GM12878 (cell line): ENCODE measurements at regions of chr15 and their contacts with region 1.

Region 1: GRCh38 chr15:93173369-93173768 is 84.4 kb upstream of the RGMA start:
- DNase-seq: no peak
- ATAC-seq: no peak
- H3K4me3 ChIP-seq: no peak overlapping the region
- H3K27ac ChIP-seq: no peak overlapping the region
- H3K4me1 ChIP-seq: no peaks in the 10 kb centered on the region; the same call in 1 of the 2 replicates
- H3K27me3 ChIP-seq: peaks cover 2 to 4% of the 10 kb centered on the region in 2 experiments; a peak in 2 of 4 replicates
- CTCF ChIP-seq: no peak
- EP300 ChIP-seq: no peak
- POLR2A ChIP-seq: no peak
- RAD21 ChIP-seq: no peak

Region 2: DNA sequence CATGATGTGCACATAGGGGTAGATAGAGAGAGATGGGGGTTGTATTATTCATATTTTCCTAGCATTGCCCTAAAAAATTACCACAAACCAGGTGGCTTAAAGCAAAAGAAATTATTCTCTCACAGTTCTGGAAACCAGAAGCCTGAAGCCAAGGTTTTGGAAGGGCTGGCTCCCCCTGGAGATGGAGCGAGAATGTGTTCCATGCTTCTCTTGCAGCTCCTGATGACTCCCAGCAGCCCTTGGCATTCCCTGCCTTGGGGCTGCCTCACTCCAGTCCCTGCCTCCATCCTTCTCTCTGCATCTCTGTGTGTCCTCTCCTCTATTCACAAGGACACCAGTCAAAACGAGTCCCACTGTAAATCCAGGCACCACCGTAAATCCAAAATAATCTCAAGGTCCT is 426.3 kb before region 1 on chr15:
- CTCF ChIA-PET with region 1: no interaction called
- POLR2A ChIA-PET with region 1: no interaction called
- RAD21 ChIA-PET with region 1: no interaction called
- SMC1A ChIA-PET with region 1: no interaction called
- in situ Hi-C with region 1: no loop called
- intact Hi-C with region 1: no loop called
- DNase-seq: no peak
- ATAC-seq: no peak
- H3K4me3 ChIP-seq: no peak overlapping the region
- H3K27ac ChIP-seq: no peak overlapping the region
- H3K4me1 ChIP-seq: no peaks in the 10 kb centered on the region
- H3K27me3 ChIP-seq: no peaks in the 10 kb centered on the region
- CTCF ChIP-seq: no peak
- EP300 ChIP-seq: no peak
- POLR2A ChIP-seq: no peak
- RAD21 ChIP-seq: no peak

Region 3: GRCh38 chr15:93158104-93158900 is 15.1 kb before region 1 on chr15:
- CTCF ChIA-PET with region 1: no interaction called
- POLR2A ChIA-PET with region 1: no interaction called
- RAD21 ChIA-PET with region 1: no interaction called
- SMC1A ChIA-PET with region 1: no interaction called
- in situ Hi-C with region 1: no loop called
- intact Hi-C with region 1: no loop called
- DNase-seq: no peak
- ATAC-seq: no peak
- H3K4me3 ChIP-seq: no peak overlapping the region
- H3K27ac ChIP-seq: no peak overlapping the region
- H3K4me1 ChIP-seq: no peaks in the 10 kb centered on the region
- H3K27me3 ChIP-seq: no peaks in the 10 kb centered on the region
- CTCF ChIP-seq: no peak
- EP300 ChIP-seq: no peak
- POLR2A ChIP-seq: no peak
- RAD21 ChIP-seq: no peak

Region 4: DNA sequence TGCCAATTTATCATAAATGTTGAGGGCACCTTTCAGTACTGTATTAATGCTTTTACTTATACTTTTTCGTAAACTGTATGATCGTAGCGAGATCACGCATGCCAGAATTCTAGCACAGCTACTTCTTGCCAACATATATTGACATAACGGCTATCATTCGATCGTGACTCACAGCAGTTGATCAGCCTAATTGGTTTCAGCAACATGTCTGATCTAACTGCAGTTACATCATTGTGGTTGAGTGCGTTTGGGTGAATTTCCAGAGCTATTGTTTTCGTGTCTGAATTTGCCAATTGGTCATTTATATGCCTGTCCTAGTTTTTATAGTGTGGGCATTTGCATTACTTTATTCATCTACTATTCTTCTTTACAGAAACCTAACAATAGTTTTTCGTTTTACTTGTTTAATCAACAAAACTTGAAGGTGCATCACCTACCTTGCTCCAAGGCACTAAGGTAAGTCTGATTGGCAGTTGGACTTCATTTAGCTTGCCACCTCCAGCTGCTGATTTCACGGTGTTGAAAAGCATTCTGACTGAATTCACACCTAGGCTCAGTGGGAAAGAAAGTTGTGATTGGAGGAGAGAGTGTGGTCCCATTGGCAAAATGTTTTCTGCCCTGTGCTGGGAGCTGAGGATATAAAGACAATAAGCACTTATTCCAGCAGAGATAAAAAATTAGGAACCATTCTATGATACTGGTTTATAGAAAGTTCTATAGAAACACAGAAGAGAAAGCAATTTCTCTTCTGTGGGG is 36.5 kb after region 1 on chr15:
- CTCF ChIA-PET with region 1: no interaction called
- POLR2A ChIA-PET with region 1: no interaction called
- RAD21 ChIA-PET with region 1: no interaction called
- SMC1A ChIA-PET with region 1: no interaction called
- in situ Hi-C with region 1: no loop called
- intact Hi-C with region 1: loop called (anchors 5 kb)
- DNase-seq: no peak
- ATAC-seq: no peak
- H3K4me3 ChIP-seq: no peak overlapping the region
- H3K27ac ChIP-seq: no peak overlapping the region
- H3K4me1 ChIP-seq: no peaks in the 10 kb centered on the region
- H3K27me3 ChIP-seq: no peaks in the 10 kb centered on the region
- CTCF ChIP-seq: no peak
- EP300 ChIP-seq: no peak
- POLR2A ChIP-seq: no peak
- RAD21 ChIP-seq: no peak